ENCODE measurements at regions of chr9 and their contacts with region 1.

Region 1: DNA sequence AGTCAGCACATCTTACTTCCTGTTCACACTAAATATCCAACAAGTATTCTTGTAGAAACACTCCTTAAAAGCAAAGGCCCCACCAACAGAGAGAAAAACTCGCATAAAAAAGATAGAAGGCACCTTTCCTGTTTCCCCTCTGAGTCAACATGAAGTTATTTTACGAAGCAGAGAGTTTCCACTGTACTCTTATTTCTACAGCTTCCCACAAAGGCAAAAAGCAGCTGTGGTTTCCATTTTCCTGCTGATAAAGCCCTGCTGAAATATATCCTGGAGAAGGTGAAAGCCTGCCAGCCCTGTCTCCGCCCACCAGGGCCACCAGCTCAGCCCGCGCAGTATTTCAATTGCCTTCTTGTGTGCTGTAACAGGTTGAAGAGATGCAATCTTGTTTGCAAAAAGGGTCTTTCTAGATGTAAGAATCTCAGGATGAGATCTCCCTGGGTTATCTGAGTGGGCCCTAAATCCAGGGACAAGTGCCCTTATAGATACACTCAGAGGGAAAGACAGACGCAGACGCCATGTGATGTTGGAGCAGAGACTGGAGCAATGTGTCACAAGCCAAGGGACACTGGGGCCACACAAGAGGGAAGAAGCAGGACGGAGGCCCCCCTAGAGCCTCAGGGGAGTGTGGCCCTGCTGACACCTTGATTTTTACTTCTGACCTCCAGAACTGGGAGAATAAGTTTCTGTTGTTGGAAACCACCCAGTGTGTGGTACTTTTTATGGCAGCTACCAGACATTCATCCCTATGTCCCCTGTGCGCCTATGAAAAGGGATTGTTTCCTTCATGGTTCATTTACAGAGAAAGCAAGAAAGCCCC is 19.9 kb downstream of the SEMA4D start:
- DNase-seq: peak; percentile 75
- ATAC-seq: peak; percentile 31
- H3K4me3 Mint-ChIP-seq: peak overlapping the region; percentile 90
- H3K27ac Mint-ChIP-seq: peak overlapping the region; percentile 98
- H3K4me1 Mint-ChIP-seq: peaks cover 85% of the 10 kb centered on the region
- H3K27me3 Mint-ChIP-seq: peaks cover 3% of the 10 kb centered on the region
- CTCF ChIP-seq: no peak

Region 2: DNA sequence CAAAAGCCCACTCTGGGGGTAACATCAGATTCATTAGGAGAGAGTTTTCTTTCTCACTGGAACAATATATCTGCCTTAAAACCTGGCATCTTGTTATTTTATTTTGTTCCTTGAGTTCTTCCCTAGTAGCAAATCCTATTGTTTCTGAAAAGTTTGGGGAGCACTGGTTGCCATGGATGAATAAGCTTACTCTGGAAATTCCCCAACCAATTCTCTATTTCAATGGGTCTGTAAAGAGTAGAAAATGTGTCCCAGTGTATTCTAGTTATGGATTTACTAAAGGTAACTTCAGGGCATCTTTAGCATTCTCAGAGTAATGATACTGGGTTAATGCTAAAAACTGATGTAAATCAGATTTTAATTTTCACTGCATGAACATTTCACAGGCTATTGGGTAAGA is 580.9 kb before region 1 on chr9:
- CTCF ChIA-PET with region 1: no interaction called
- POLR2A ChIA-PET with region 1: no interaction called
- intact Hi-C with region 1: no loop called
- DNase-seq: no peak
- ATAC-seq: no peak
- H3K4me3 Mint-ChIP-seq: no peak overlapping the region
- H3K27ac Mint-ChIP-seq: no peak overlapping the region
- H3K4me1 Mint-ChIP-seq: no peaks in the 10 kb centered on the region
- H3K27me3 Mint-ChIP-seq: peaks cover 13% of the 10 kb centered on the region
- CTCF ChIP-seq: no peak

Region 3: GRCh38 chr9:89304020-89304833 is 173.8 kb before region 1 on chr9:
- CTCF ChIA-PET with region 1: no interaction called
- POLR2A ChIA-PET with region 1: no interaction called
- intact Hi-C with region 1: no loop called
- DNase-seq: no peak
- ATAC-seq: no peak
- H3K4me3 Mint-ChIP-seq: no peak overlapping the region
- H3K27ac Mint-ChIP-seq: no peak overlapping the region
- H3K4me1 Mint-ChIP-seq: peaks cover 8% of the 10 kb centered on the region
- H3K27me3 Mint-ChIP-seq: no peaks in the 10 kb centered on the region
- CTCF ChIP-seq: no peak

Region 4: DNA sequence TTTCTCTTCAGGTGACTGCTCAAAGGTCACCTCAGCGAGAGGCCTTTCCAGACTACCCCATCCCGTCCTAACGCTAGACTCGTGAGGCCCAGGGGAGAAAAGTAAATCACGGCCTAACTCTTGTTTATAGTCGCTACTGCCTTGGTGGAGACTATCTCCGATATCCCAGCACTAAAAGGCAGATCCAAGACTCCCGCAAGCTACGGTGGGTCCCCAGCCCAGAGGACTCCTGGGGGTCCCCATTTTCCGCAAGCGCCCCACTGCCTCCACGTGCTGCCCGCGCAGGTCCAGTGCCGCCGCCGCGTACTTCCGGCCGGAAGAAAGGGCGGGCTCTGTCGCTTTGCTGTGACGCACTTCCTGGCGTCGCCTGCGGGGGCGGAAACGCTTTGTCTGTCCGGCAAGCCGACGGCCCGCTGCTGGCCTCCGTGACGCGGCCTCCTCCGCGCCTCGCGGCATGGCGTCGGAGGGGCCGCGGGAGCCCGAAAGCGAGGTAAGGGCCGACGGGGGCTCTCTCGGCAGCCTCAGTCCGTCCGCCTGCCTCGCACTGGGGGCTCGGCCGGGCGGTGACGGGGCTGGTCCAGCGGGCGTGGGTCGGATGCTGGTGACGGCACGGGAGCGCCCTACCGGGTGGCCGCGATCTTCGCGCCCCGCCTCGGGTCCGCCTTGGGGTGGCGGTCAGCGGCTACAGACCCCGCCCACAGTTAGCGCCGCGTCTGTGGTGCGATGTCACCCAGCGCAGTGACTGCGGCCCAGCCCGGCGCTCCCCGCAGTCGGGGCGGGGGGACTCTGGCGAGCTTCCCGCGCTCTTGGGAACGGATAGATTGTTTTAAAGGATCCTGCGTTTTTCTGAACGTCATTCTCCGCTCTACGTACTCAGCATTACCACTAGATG is 159.7 kb before region 1 on chr9 and contains the start of gene SECISBP2:
- CTCF ChIA-PET with region 1: no interaction called
- POLR2A ChIA-PET with region 1: no interaction called
- intact Hi-C with region 1: loop called (anchors 5 kb)
- DNase-seq: peak; percentile 96
- ATAC-seq: peak; percentile 89
- H3K4me3 Mint-ChIP-seq: peak within 1 kb of the TSS; percentile 86
- H3K27ac Mint-ChIP-seq: peak within 1 kb of the TSS; percentile 99
- H3K4me1 Mint-ChIP-seq: peaks cover 78% of the 10 kb centered on the region
- H3K27me3 Mint-ChIP-seq: no peaks in the 10 kb centered on the region
- CTCF ChIP-seq: no peak
- total RNA-seq, gene SECISBP2: 40.4 to 42.5 TPM

Region 5: DNA sequence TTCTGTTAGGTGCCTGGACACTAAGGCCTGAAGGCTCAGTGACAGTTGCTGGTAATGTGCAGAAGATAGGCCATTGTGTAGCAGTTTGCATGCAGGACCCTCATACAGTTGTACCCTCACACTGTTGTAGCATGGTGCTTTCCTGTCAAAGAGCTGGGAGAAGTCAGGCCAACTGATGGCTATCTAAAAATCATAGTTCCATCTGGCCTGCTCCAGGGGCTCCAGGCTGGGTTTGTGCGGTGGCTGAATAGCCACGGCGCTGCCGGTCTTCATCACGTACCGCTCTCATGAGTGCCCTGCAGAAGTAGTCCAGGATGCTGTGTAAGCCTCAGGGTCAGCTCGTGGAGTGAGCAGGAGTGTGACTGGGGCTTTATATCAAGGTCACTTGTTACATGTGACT is 147.5 kb before region 1 on chr9:
- CTCF ChIA-PET with region 1: no interaction called
- POLR2A ChIA-PET with region 1: no interaction called
- intact Hi-C with region 1: no loop called
- DNase-seq: no peak
- ATAC-seq: no peak
- H3K4me3 Mint-ChIP-seq: no peak overlapping the region
- H3K27ac Mint-ChIP-seq: no peak overlapping the region
- H3K4me1 Mint-ChIP-seq: peaks cover 14% of the 10 kb centered on the region
- H3K27me3 Mint-ChIP-seq: no peaks in the 10 kb centered on the region
- CTCF ChIP-seq: no peak

Region 6: DNA sequence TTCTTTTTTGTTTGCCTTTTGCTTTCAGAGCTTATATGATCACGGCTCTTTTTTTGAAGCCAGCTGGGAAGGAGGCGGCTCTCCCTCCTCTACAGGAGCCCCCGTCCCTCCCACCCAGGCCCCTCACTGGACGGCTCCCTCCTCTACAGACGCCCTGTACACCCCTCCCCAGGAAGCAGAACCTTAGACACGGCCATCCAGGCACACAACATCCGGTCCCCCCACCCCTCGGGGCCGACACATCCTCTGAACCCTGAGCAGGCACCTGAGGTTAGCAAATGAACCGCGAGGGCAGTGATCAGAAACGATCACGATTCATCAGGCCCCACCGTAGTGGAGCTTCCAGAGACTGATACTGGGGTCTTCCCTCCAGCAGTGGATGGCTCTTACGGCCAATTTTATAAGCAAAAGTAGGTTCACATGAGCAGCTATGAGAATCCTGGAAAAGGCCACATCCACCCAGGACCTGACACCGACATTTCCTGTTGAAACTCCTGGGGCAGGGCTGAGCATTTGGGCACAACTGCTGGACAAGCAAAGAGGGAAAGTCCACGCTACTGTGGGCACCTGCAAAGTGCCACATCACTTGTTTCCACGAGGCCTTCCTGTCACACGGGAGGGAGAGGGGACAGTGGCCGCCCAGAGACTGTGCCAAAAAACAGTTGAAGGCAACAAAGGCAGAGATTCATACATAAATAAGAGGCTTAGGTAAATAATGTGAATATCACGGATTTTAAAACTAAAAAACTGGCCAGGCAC is 59.0 kb before region 1 on chr9:
- CTCF ChIA-PET with region 1: no interaction called
- POLR2A ChIA-PET with region 1: interaction called, 43 read pairs
- intact Hi-C with region 1: no loop called
- DNase-seq: peak; percentile 92
- ATAC-seq: peak; percentile 52
- H3K4me3 Mint-ChIP-seq: peak overlapping the region; percentile 79
- H3K27ac Mint-ChIP-seq: peak overlapping the region; percentile 98
- H3K4me1 Mint-ChIP-seq: peaks cover 97% of the 10 kb centered on the region
- H3K27me3 Mint-ChIP-seq: no peaks in the 10 kb centered on the region
- CTCF ChIP-seq: no peak

Region 7: DNA sequence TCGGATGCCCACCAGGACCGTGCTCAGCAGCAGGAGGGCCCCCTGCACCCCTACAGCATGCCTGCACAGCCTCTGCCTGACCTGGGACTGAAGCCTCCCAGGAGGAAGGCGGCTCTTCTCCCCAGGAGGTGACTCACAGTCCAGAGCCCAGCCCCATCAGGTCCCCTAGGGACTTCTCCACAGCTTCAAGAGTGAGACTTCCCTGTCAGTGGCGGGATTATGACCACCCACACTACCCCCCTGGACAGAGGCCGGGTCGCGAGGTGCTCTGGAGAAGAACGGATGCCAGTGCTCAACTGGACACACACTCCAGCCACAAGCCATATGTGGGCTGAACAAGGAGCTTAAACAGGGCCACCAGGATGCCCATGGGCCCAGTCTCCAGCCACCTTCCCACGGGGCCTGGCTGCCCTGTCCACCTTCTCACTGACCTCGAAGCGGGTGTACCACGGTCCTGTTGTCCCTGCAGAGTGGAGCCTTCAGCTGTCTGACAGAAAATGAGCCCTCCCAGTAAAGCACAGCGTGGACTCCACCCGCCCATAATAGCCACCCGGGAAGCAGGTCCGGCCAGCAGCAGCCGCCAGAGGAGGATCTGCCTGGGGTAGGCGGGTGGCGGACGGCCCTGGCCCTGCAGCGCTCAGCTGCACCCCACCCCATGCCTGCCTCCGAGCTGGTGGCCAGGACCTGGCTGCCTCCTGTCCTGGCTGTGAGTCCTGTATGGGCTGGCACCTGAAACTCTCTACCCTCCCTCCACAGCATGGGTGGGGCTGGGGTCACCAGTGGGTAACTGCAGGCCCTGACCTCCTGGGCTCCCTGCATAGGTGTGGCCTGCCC is 34.8 kb before region 1 on chr9:
- CTCF ChIA-PET with region 1: interaction called, 3 read pairs
- POLR2A ChIA-PET with region 1: interaction called, 20 read pairs
- intact Hi-C with region 1: no loop called
- DNase-seq: no peak
- ATAC-seq: no peak
- H3K4me3 Mint-ChIP-seq: no peak overlapping the region
- H3K27ac Mint-ChIP-seq: peak overlapping the region; percentile 93
- H3K4me1 Mint-ChIP-seq: peaks cover 90% of the 10 kb centered on the region
- H3K27me3 Mint-ChIP-seq: no peaks in the 10 kb centered on the region
- CTCF ChIP-seq: no peak

Region 8: GRCh38 chr9:89461265-89461664 is 16.8 kb before region 1 on chr9:
- CTCF ChIA-PET with region 1: interaction called, 3 read pairs
- POLR2A ChIA-PET with region 1: interaction called, 32 read pairs
- intact Hi-C with region 1: loop called (anchors 2 kb)
- DNase-seq: peak; percentile 75
- ATAC-seq: peak; percentile 28
- H3K4me3 Mint-ChIP-seq: peak overlapping the region; percentile 22
- H3K27ac Mint-ChIP-seq: peak overlapping the region; percentile 95
- H3K4me1 Mint-ChIP-seq: peaks cover 94% of the 10 kb centered on the region
- H3K27me3 Mint-ChIP-seq: no peaks in the 10 kb centered on the region
- CTCF ChIP-seq: no peak

Region 9: GRCh38 chr9:89489548-89490530 is 11.8 kb after region 1 on chr9:
- CTCF ChIA-PET with region 1: interaction called, 4 read pairs
- POLR2A ChIA-PET with region 1: interaction called, 15 read pairs
- intact Hi-C with region 1: no loop called
- DNase-seq: no peak
- ATAC-seq: peak; percentile 66
- H3K4me3 Mint-ChIP-seq: peak overlapping the region; percentile 61
- H3K27ac Mint-ChIP-seq: peak overlapping the region; percentile 89
- H3K4me1 Mint-ChIP-seq: peaks cover 95% of the 10 kb centered on the region
- H3K27me3 Mint-ChIP-seq: no peaks in the 10 kb centered on the region
- CTCF ChIP-seq: no peak

Region 10: DNA sequence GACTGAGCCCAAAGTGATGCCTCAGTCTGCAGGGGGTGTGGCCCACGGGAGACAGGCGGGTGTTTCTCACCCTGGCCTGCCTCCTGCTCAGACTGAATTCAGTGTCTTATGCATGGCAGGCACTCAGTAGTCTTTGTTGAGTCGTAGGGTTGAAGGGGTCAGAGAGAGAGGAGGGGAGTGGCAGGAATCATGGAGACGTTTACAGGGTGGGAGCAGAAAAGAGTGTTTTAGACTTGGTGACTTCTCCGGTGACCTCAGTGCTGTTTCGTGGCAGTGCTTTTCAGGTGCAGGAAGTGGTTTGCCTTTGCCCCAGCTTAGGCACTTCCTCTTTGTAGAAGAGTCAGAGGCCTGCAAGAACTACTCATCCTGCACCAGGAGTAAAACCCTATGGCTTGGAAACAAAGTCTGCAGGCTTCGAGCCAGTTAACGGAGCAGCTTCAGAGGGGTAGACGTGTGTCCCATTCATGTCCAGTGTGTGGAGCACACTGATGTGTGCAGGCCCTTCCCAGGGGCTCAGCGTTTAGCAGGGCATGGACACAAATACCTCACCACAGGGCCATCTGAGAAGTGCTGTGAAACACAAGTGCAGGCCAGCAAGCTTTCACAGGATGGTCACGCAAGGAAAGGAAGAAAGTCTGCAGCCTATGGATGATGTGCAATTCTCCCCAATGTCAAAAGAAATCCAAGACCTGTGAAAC is 44.4 kb after region 1 on chr9:
- CTCF ChIA-PET with region 1: no interaction called
- POLR2A ChIA-PET with region 1: interaction called, 19 read pairs
- intact Hi-C with region 1: no loop called
- DNase-seq: peak; percentile 88
- ATAC-seq: peak; percentile 88
- H3K4me3 Mint-ChIP-seq: peak overlapping the region; percentile 64
- H3K27ac Mint-ChIP-seq: peak overlapping the region; percentile 97
- H3K4me1 Mint-ChIP-seq: peaks cover 90% of the 10 kb centered on the region
- H3K27me3 Mint-ChIP-seq: no peaks in the 10 kb centered on the region
- CTCF ChIP-seq: no peak